GM12878 (cell line): ENCODE measurements at regions of chr6 and their contacts with region 1.

Region 1: DNA sequence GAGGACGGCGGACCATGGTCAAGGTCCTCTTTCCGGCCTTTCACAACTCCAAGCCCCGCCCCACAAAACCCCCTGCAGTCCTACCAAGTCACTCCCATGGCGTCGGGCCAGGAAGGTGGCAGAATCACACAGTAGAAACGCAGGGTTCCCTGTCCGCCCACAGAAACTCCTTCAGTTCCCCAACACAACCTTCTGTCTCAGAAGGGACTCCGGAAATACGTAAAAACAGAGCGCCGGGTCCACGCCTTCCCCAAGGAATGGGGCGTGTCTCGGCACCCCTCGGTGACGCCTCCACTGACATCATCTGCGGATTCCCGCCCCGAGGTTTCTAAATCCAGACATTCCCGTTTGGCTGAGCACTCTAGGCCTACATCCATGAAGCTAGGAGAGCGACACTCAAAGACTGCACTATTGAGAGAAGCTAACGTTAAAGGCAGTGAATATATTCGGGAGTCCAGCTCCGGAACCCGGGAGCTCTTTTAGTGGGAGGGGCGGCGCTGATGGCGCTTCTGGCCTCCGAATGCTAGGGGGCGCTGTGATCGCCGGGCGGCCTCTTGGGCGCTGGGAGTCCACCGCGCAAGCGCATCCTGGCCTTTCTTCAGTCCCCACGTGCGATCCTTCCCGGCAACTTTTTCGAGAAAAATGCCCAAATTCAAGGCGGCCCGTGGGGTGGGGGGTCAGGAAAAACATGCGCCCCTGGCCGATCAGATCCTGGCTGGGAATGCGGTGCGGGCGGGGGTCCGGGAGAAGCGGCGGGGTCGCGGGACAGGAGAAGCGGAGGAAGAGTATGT is at the starts of genes BYSL and MED20:
- DNase-seq: peak; percentile 83
- ATAC-seq: peak; percentile 91
- H3K4me3 ChIP-seq: peak within 1 kb of the TSS; percentile 67
- H3K27ac ChIP-seq: peak within 1 kb of the TSS; percentile 95
- H3K4me1 ChIP-seq: peaks cover 4% of the 10 kb centered on the region; the same call in 1 of the 2 replicates
- H3K27me3 ChIP-seq: no peaks in the 10 kb centered on the region
- CTCF ChIP-seq: peak; percentile 92 to 98 (median 94)
- EP300 ChIP-seq: 0 out of 4 replicates have a peak, but pooled peaks have one; percentile 35 to 57
- POLR2A ChIP-seq: peak; percentile 81
- RAD21 ChIP-seq: no peak
- polyA plus RNA-seq, gene BYSL: 12.6 to 28.4 TPM
- polyA plus RNA-seq, gene MED20: 15.9 to 21.7 TPM

Region 2: GRCh38 chr6:41846666-41847237 is 74.4 kb before region 1 on chr6:
- CTCF ChIA-PET with region 1: interaction called, 4 read pairs
- POLR2A ChIA-PET with region 1: no interaction called
- RAD21 ChIA-PET with region 1: interaction called, 7 read pairs
- SMC1A ChIA-PET with region 1: interaction called, 3 read pairs
- in situ Hi-C with region 1: no loop called
- intact Hi-C with region 1: loop called (anchors 5 kb)
- DNase-seq: peak; percentile 34
- ATAC-seq: peak; percentile 95
- H3K4me3 ChIP-seq: no peak overlapping the region
- H3K27ac ChIP-seq: peak overlapping the region; percentile 41
- H3K4me1 ChIP-seq: peaks cover 2% of the 10 kb centered on the region; the same call in 1 of the 2 replicates
- H3K27me3 ChIP-seq: no peaks in the 10 kb centered on the region
- CTCF ChIP-seq: peak; percentile 79 to 82 (median 80)
- EP300 ChIP-seq: no peak
- POLR2A ChIP-seq: no peak
- RAD21 ChIP-seq: peak; percentile 85

Region 3: DNA sequence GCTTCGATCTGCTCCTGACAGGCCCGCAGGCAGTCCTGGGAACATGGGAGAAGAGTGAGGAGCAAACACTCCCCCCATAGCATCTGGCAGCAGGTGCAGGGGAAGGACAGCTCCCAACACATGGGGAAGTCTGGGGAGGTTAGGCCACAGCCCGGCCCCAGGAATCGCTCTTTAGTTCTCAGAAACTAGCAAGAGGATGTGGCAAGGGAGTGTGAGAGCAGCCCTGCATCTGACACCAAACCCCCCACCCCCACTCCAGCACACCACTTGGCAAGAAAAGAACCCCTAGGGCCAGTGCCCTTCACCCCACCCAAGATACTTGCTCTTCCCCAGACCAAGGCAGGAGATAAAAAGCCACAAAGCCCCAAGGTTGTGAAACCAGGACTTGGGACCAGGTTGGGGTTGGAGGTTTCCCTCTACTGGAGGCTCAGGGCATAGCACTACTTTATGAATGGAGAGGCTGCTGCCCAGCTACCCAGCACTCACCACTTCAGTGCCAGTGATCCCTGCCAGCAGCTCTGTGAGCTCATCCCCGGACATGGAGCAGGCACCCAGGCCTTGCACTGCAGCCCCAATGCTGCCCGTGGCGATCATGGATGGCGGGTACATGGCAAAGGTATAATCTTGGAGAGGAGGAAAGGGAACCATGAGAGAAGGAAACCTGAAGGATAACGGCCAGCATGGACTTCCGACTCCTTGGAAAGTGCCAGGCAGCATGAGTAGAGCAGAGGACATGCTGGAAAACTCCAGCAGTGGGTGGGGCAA is 15.1 kb after region 1 on chr6:
- CTCF ChIA-PET with region 1: interaction called, 137 read pairs
- POLR2A ChIA-PET with region 1: interaction called, 4 read pairs
- RAD21 ChIA-PET with region 1: interaction called, 16 read pairs
- SMC1A ChIA-PET with region 1: interaction called, 12 read pairs
- in situ Hi-C with region 1: no loop called
- intact Hi-C with region 1: no loop called
- DNase-seq: peak; percentile 53
- ATAC-seq: peak; percentile 83
- H3K4me3 ChIP-seq: no peak overlapping the region
- H3K27ac ChIP-seq: peak overlapping the region; percentile 60
- H3K4me1 ChIP-seq: peaks cover 43% of the 10 kb centered on the region
- H3K27me3 ChIP-seq: no peaks in the 10 kb centered on the region
- CTCF ChIP-seq: peak; percentile 84 to 94 (median 91)
- EP300 ChIP-seq: no peak
- POLR2A ChIP-seq: peak; percentile 35
- RAD21 ChIP-seq: peak; percentile 68

Region 4: GRCh38 chr6:42038811-42039408 is 117.8 kb after region 1 on chr6:
- CTCF ChIA-PET with region 1: interaction called, 90 read pairs
- POLR2A ChIA-PET with region 1: interaction called, 3 read pairs
- RAD21 ChIA-PET with region 1: interaction called, 23 read pairs
- SMC1A ChIA-PET with region 1: interaction called, 23 read pairs
- in situ Hi-C with region 1: no loop called
- intact Hi-C with region 1: loop called (anchors 1 kb)
- DNase-seq: no peak
- ATAC-seq: no peak
- H3K4me3 ChIP-seq: 0 out of 2 replicates have a peak overlapping the region, but pooled peaks have one; percentile 2
- H3K27ac ChIP-seq: peak overlapping the region; percentile 52
- H3K4me1 ChIP-seq: peaks cover 15% of the 10 kb centered on the region
- H3K27me3 ChIP-seq: no peaks in the 10 kb centered on the region
- CTCF ChIP-seq: no peak
- EP300 ChIP-seq: no peak
- POLR2A ChIP-seq: no peak
- RAD21 ChIP-seq: no peak

Region 5: GRCh38 chr6:42217519-42218367 is 296.6 kb after region 1 on chr6 and contains the start of gene MRPS10:
- CTCF ChIA-PET with region 1: interaction called, 7 read pairs
- POLR2A ChIA-PET with region 1: interaction called, 4 read pairs
- RAD21 ChIA-PET with region 1: interaction called, 5 read pairs
- SMC1A ChIA-PET with region 1: interaction called, 4 read pairs
- in situ Hi-C with region 1: no loop called
- intact Hi-C with region 1: loop called (anchors 2 kb)
- DNase-seq: peak; percentile 74
- ATAC-seq: peak; percentile 98
- H3K4me3 ChIP-seq: peak within 1 kb of the TSS; percentile 85
- H3K27ac ChIP-seq: peak within 1 kb of the TSS; percentile 65
- H3K4me1 ChIP-seq: peaks cover 5% of the 10 kb centered on the region; the same call in 1 of the 2 replicates
- H3K27me3 ChIP-seq: no peaks in the 10 kb centered on the region
- CTCF ChIP-seq: no peak
- EP300 ChIP-seq: 0 out of 4 replicates have a peak, but pooled peaks of 1 of the 2 experiments have one; percentile 14
- POLR2A ChIP-seq: peak; percentile 97
- RAD21 ChIP-seq: no peak
- polyA plus RNA-seq, gene MRPS10: 70.4 to 83.3 TPM